Esophagus squamous epithelium (tissue), 5 donors: ENCODE measurements at regions of chr5 and their contacts with region 1.

Region 1: DNA sequence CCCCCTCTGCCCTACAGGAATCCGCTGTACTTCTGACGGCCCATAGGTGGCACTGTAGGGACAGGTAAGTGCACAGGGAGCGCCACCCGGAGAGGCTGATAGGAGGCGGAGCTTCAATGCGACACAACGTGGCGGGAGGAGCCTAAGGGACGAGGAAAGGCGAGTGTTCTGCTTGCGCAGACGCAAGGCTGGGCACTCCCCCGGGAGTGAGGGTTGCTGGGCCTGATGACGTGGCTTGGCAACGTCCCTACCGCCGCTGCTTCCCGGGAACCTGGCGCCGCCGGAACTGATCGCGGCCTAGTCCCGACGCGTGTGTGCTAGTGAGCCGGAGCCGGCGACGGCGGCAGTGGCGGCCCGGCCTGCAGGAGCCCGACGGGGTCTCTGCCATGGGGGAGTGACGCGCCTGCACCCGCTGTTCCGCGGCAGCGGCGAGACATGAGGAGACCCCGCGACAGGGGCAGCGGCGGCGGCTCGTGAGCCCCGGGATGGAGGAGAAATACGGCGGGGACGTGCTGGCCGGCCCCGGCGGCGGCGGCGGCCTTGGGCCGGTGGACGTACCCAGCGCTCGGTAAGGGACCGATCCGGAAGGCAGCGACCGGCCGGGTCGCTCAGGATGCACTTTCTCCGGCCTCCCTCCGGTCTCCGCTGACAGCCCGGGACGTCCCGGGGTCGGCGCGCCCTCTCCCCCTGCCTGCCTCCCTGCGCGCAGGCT is at the start of gene SLC30A5:
- DNase-seq: peak; percentile 98
- H3K4me3 ChIP-seq: peak within 1 kb of the TSS; percentile 80 to 91 (median 88)
- H3K27ac ChIP-seq: peak within 1 kb of the TSS; percentile 95 to 96 (median 96)
- H3K4me1 ChIP-seq: peaks cover 7 to 31% (median 12%) of the 10 kb centered on the region in 3 donors
- H3K27me3 ChIP-seq: no peaks in the 10 kb centered on the region
- CTCF ChIP-seq: peak; percentile 85 to 97 (median 95)
- POLR2A ChIP-seq: peak in 3 of 4 donors; percentile 46 to 85 (median 79)
- total RNA-seq, gene SLC30A5: 19.4 to 43.5 (median 37.9) TPM

Region 2: GRCh38 chr5:69334793-69335268 is 240.9 kb after region 1 on chr5:
- intact Hi-C with region 1: loop called (anchors 10 kb)
- DNase-seq: no peak
- H3K4me3 ChIP-seq: peak overlapping the region in 1 of 4 donors; percentile 17
- H3K27ac ChIP-seq: no peak overlapping the region
- H3K4me1 ChIP-seq: peaks cover 10 to 34% (median 11%) of the 10 kb centered on the region in 3 donors
- H3K27me3 ChIP-seq: no peaks in the 10 kb centered on the region
- CTCF ChIP-seq: peak; percentile 47 to 82 (median 69)
- POLR2A ChIP-seq: no peak